Activated T-helper 2 cell treated with anti-CD3 and anti-CD28 coated beads, Interferon-gamma antibody, Interleukin-2, Interleukin-4, amounts not matched to agents 10 μg/mL and 5 μg/mL and 100 μg/mL, durations not matched to agents 14 hours and 24 hours and 36 hours (primary cell): ENCODE measurements at regions of chr18 and their contacts with region 1.

Region 1: DNA sequence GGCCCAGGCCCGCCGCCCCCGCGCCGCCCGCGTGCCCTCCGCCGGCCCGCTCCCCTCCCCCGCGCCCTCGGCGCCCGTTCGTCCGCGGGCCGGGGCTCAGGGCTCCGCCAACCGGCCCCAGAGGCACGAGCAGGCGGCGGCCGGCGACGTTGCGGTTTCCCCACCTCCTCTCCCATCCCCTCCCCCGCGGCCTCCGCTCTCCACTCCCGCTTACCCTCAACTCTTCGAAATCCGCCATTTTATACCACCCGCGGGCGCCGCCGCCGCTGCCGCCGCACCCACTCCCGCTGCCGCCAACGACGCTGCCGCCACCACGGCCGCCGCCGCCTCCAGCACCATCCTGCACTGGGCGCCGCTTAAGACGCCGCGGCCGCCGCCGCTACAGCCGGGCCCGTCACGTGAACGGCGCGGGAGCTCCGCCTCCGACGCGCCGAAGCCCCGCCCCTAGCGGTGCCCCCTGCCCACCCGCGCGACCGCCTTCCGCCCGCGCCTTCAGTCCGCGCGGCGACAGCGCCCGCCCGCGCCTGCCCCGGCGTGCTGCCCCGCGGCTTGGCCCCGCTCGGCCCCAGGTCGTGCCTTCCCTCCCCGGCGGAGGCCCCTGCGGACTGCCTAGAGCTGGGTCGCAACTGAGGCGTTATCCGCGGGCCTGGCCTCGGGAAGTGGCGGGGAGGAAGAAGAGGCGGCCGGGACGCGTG is at the starts of genes KATNAL2 and PIAS2:
- DNase-seq: peak; percentile 72
- H3K4me3 Mint-ChIP-seq: peak within 1 kb of the TSS; percentile 87
- H3K27ac Mint-ChIP-seq: peak within 1 kb of the TSS; percentile 84
- H3K4me1 Mint-ChIP-seq: peaks cover 33% of the 10 kb centered on the region
- H3K27me3 Mint-ChIP-seq: peaks cover 6% of the 10 kb centered on the region
- total RNA-seq, gene KATNAL2: 0.23 and 0.37 TPM in 2 replicates
- total RNA-seq, gene PIAS2: 24.2 and 27.1 TPM in 2 replicates

Region 2: DNA sequence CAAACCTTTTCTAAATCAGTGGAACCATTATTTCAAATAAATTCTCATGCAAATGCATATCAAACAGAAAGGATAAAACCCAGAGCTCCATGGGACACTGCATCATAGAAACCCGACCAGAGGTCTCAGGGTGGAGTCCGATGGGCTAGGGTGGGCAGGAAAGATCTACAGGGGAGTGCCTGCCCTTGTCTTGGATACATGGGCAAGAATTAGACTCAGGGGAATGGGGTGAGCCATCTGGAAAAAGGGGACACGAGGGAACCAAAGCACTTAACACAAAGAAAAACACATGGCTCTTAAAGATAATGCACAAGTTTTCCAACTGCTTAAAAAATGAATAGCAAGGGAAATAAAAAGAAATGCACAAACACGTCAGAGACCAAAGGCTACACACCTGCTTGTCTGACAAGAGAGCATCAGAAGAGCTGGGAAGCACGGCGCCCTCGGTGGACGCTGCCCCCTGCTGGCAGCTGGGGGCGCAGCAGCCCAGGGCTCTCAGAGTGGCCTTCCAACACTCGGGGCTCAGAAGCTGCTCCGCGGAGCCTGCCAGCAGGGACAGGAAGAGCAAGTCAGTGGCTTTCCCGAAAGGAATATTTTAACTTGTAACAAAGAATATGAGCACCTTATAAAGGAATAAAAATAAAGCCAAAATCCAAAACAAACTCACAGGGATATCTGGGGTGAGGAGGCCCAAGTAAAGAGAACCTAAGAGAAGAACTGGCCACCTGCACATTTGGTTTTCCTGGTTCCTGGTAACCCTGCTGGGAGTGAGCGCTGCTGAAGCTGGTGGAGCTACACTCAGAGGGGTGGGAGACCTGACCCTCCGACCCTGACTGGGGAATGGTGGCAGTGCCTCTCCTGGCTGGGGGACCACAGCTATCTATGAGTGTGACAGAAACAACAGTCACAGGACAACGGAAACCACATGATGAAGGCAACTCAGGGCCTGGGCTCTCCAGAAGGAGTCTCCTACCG is 1037.3 kb before region 1 on chr18:
- intact Hi-C with region 1: loop called (anchors 10 kb)
- DNase-seq: peak; percentile 52
- H3K4me3 Mint-ChIP-seq: no peak overlapping the region
- H3K27ac Mint-ChIP-seq: no peak overlapping the region
- H3K4me1 Mint-ChIP-seq: peaks cover 12% of the 10 kb centered on the region
- H3K27me3 Mint-ChIP-seq: no peaks in the 10 kb centered on the region

Region 3: DNA sequence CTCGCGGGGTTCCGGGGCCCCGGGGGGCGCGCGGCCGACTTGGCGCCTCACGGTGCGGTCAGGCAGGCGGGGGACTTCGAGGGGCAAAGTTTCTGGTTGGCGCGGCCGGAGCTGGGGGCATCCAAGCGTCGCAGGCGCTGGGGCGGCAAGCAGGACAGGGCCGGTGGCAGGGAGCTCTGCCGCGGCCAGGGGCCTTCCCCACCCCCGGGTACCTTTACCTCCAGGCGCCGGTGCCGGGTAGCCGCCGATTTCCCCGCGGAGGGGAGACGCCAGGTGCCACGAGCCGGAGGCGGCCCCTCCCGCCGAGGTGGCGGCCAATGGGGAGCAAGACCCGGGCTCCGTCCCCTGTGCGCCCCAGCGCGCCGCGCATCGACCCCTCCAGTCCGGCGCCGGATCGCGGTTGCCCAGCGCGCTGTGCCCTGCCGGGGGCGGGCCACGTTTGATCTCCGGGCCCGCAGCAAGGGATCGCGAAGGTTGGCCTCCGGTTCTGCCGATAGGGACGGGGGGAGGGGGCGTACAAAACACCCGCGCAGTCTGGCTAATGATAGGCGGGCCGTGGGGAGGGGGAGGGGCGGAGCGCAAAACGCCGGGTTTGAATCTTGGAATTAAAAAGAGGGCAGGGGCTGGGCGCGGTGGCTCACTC is 160.6 kb before region 1 on chr18 and contains the start of gene ST8SIA5:
- intact Hi-C with region 1: loop called (anchors 5 kb)
- DNase-seq: no peak
- H3K4me3 Mint-ChIP-seq: peak within 1 kb of the TSS; percentile 60
- H3K27ac Mint-ChIP-seq: no peak within 1 kb of the TSS
- H3K4me1 Mint-ChIP-seq: peaks cover 24% of the 10 kb centered on the region
- H3K27me3 Mint-ChIP-seq: peaks cover 61% of the 10 kb centered on the region
- total RNA-seq, gene ST8SIA5: 0.05 and 0.39 TPM in 2 replicates

Region 4: DNA sequence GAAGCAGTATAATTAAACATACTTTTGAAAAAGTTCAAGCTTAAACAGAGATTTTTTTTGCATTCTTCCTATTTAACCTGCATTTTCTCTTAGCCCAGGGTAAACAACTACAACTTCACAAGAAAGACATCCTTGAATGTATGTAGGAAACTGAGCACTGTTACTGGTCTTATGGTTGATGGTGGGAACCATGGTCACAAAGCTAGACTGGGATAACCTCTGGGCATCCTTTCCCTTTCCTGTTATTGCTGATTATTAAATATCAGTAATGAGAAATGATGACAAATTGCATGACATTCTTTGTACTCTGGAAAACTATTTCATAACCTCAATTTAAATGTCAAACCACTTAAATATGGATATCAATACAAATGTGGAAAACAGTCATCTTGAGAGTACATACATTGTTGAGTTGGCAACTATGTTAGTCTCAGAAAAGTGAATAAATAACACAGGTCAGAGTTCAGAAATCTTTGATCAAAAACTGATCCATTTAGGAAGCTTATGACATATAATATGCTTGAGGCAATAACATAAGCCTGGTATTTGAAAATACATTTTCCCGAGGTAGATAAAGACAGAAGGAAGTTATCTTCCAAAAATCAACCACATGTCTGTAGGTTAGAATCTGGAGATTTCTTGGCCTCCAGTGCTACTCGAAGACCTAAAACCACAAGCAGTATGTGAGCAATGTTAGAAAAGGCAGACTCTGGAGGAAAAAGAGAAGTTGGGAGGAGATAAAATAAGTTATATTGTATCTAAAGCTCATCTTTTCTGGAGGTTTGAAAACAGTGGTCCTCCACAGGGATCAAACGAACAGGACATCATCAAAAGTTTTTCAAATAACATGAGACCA is 95.2 kb before region 1 on chr18:
- intact Hi-C with region 1: loop called (anchors 5 kb)
- DNase-seq: no peak
- H3K4me3 Mint-ChIP-seq: no peak overlapping the region
- H3K27ac Mint-ChIP-seq: peak overlapping the region; percentile 78
- H3K4me1 Mint-ChIP-seq: peaks cover 15% of the 10 kb centered on the region
- H3K27me3 Mint-ChIP-seq: no peaks in the 10 kb centered on the region

Region 5: GRCh38 chr18:46859855-46860254 is 57.4 kb before region 1 on chr18:
- intact Hi-C with region 1: loop called (anchors 10 kb)
- DNase-seq: no peak
- H3K4me3 Mint-ChIP-seq: no peak overlapping the region
- H3K27ac Mint-ChIP-seq: no peak overlapping the region
- H3K4me1 Mint-ChIP-seq: peaks cover 11% of the 10 kb centered on the region
- H3K27me3 Mint-ChIP-seq: no peaks in the 10 kb centered on the region

Region 6: GRCh38 chr18:46891742-46892214 is 25.5 kb before region 1 on chr18:
- intact Hi-C with region 1: loop called (anchors 2 kb)
- DNase-seq: no peak
- H3K4me3 Mint-ChIP-seq: no peak overlapping the region
- H3K27ac Mint-ChIP-seq: no peak overlapping the region
- H3K4me1 Mint-ChIP-seq: peaks cover 17% of the 10 kb centered on the region
- H3K27me3 Mint-ChIP-seq: no peaks in the 10 kb centered on the region

Region 7: GRCh38 chr18:47150029-47150823 is 233.0 kb after region 1 on chr18 and contains the start of gene HDHD2:
- intact Hi-C with region 1: loop called (anchors 10 kb)
- DNase-seq: peak; percentile 66
- H3K4me3 Mint-ChIP-seq: peak within 1 kb of the TSS; percentile 95
- H3K27ac Mint-ChIP-seq: peak within 1 kb of the TSS; percentile 92
- H3K4me1 Mint-ChIP-seq: peaks cover 26% of the 10 kb centered on the region
- H3K27me3 Mint-ChIP-seq: no peaks in the 10 kb centered on the region
- total RNA-seq, gene HDHD2: 39.3 and 40.8 TPM in 2 replicates